Common myeloid progenitor, CD34-positive (primary cell): ENCODE measurements at regions of chr14 and their contacts with region 1.

Region 1: GRCh38 chr14:58107947-58108552 is 44.0 kb downstream of the ARMH4 start:
- DNase-seq: peak; percentile 71 to 89 (median 83)
- H3K4me3 ChIP-seq: no peak overlapping the region
- H3K27ac ChIP-seq: no peak overlapping the region
- H3K4me1 ChIP-seq: no peaks in the 10 kb centered on the region
- H3K27me3 ChIP-seq: peaks cover 0 to 8% (median 3%) of the 10 kb centered on the region in 5 experiments

Region 2: GRCh38 chr14:57833323-57833722 is 274.7 kb before region 1 on chr14:
- CTCF ChIA-PET with region 1: no interaction called
- POLR2A ChIA-PET with region 1: no interaction called
- DNase-seq: no peak
- H3K4me3 ChIP-seq: no peak overlapping the region
- H3K27ac ChIP-seq: no peak overlapping the region
- H3K4me1 ChIP-seq: no peaks in the 10 kb centered on the region
- H3K27me3 ChIP-seq: peaks cover 0 to 2% (median 0%) of the 10 kb centered on the region in 5 experiments

Region 3: DNA sequence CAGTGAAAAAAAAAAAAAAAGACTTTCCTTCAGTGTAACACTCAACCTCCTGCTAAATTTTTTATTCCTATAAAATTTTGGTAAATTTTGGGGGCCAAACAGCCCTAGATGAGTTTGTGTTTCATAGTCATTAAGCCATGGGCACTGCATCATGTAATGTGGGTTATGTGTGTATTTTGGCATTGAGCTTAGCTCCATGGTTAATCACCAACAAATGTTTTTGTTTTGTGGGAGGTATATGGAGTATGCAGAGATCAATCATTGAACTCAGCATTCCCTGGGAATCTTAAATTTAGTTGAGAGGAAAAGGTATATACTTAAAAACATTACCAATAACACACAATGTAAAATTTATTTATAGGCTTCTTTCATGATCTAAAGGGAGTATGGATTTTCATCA is 52.5 kb after region 1 on chr14:
- CTCF ChIA-PET with region 1: interaction called, 103 read pairs
- POLR2A ChIA-PET with region 1: no interaction called
- DNase-seq: no peak
- H3K4me3 ChIP-seq: no peak overlapping the region
- H3K27ac ChIP-seq: no peak overlapping the region
- H3K4me1 ChIP-seq: no peaks in the 10 kb centered on the region
- H3K27me3 ChIP-seq: peaks cover 0 to 4% (median 0%) of the 10 kb centered on the region in 5 experiments

Region 4: GRCh38 chr14:58166005-58166983 is 58.2 kb after region 1 on chr14:
- CTCF ChIA-PET with region 1: interaction called, 103 read pairs
- POLR2A ChIA-PET with region 1: interaction called, 3 read pairs
- DNase-seq: peak; percentile 66 to 82 (median 76)
- H3K4me3 ChIP-seq: no peak overlapping the region
- H3K27ac ChIP-seq: no peak overlapping the region
- H3K4me1 ChIP-seq: peaks cover 0 to 4% (median under 1%) of the 10 kb centered on the region in 4 experiments
- H3K27me3 ChIP-seq: peaks cover 0 to 4% (median 0%) of the 10 kb centered on the region in 5 experiments